Testis (tissue), 5 donors: ENCODE measurements at regions of chr2 and their contacts with region 1.

Region 1: DNA sequence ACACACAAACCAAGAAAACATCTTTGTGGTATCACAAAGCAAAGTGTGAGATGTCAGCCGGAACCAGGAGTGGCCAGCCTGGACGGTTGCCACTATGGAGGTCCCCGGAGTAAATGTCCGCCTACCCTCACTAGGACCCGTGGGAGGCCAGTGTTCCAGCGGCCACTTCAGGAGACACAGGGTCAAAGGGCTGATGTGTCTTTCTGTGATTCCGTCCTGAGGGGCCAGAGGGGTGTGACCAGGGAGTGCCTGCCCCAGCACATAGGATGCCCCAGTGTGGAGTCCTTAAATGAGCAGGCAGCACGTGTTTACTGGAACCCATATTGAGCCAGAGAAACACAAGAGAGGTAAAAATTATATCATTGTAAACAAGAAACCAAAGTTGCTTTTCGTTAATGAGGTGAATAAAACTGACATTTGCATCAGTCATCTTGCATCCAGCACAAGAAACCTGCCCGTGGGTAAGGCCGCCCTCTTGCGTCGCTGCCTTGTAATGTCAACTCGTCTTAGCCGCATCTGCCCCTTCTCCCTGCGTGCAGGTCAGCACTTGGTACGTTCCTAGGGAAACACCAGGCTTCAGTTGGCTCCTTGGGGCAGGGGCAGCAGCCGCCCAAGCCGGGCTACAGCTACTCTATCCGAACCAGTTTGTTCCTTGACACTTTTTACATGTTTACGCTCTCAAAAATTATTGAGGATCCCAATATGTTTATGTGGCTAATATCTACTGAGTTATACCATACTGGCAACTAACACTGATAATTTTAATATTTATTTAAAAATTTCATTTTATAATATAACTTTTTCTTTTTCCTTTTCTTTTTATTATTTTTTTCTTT is 46.7 kb upstream of the LAPTM4A start:
- DNase-seq: peak; percentile 90
- H3K4me3 ChIP-seq: no peak overlapping the region
- H3K27ac ChIP-seq: no peak overlapping the region
- H3K4me1 ChIP-seq: peaks cover 7% of the 10 kb centered on the region
- H3K27me3 ChIP-seq: no peaks in the 10 kb centered on the region
- CTCF ChIP-seq: peak; percentile 65 to 85 (median 82)
- POLR2A ChIP-seq: no peak

Region 2: DNA sequence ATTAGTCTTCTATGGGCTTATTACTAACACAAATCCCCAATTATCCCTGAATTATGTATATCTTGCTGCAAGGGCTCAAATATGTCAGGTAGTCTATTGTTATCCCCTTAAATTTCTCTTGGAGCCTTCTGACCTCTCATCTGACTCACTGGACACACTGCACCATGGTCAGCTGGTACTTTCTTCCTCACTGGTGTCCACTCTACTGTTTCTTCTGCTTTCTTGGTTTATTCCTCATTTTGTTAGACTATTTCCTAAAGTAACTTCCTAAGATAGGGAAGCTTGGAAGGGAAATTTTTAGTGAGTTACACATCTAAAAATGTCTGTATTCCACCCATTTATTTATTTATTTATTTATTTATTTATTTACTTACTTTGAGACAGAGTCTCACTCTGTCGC is 134.7 kb before region 1 on chr2:
- intact Hi-C with region 1: loop called (anchors 10 kb)
- DNase-seq: no peak
- H3K4me3 ChIP-seq: no peak overlapping the region
- H3K27ac ChIP-seq: no peak overlapping the region
- H3K4me1 ChIP-seq: no peaks in the 10 kb centered on the region
- H3K27me3 ChIP-seq: no peaks in the 10 kb centered on the region
- CTCF ChIP-seq: no peak
- POLR2A ChIP-seq: no peak

Region 3: GRCh38 chr2:20012299-20013125 is 85.6 kb before region 1 on chr2 and contains the start of gene MATN3:
- intact Hi-C with region 1: loop called (anchors 5 kb)
- DNase-seq: peak; percentile 31
- H3K4me3 ChIP-seq: peak within 1 kb of the TSS; percentile 47 to 50
- H3K27ac ChIP-seq: peak within 1 kb of the TSS in 1 of 2 donors; percentile 75
- H3K4me1 ChIP-seq: no peaks in the 10 kb centered on the region
- H3K27me3 ChIP-seq: no peaks in the 10 kb centered on the region
- CTCF ChIP-seq: no peak
- POLR2A ChIP-seq: no peak
- total RNA-seq, gene MATN3: 1.9 to 2.1 TPM